Cardiac septum (tissue), 1 donor: ENCODE measurements at regions of chr18 and their contacts with region 1.

Region 1: DNA sequence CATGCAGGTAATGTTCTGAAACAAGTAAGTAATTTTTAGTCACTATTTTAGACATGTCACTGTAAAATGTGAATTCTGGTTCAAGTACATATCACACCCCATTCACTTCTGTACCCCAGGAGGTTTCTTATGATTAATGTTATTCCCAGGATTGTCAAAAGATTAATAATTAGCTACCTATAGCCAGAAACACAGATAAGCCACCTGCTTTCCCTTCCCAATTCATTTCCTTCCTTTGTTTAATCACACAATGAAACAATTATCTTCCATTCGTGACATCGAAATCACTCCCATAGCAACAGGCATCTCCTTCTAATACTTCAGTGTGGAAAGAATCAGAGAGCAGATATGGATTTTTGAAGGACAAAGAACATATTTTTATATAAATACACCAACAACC is 1650.3 kb upstream of the CELF4 start:
- DNase-seq: no peak

Region 2: DNA sequence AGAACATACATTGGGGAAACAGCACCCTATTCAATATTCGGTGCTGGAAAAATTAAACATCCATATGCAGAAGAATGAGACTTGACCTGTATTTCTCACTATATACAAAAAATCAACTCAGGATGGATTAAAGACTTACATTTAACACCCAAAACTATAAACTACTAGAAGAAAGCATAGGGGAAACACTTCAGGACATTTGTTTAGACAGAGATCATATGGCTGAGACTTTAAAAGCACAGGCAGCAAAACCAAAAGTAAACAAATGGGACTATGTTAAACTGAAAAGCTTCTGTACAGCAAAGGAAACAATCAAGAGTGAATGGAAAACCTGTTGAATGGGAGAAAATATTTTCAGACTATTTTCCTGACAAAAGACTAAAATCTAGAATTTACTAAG is 43.8 kb after region 1 on chr18:
- intact Hi-C with region 1: no loop called
- DNase-seq: no peak

Region 3: GRCh38 chr18:39274535-39274934 is 58.6 kb after region 1 on chr18:
- intact Hi-C with region 1: loop called (anchors 10 kb)
- DNase-seq: no peak